ENCODE measurements at regions of chr12 and their contacts with region 1.

Region 1: GRCh38 chr12:113152835-113153814 is 3.6 kb downstream of the CFAP73 start:
- DNase-seq: peak; percentile 89
- H3K4me3 Mint-ChIP-seq: peak overlapping the region; percentile 98
- H3K27ac Mint-ChIP-seq: peak overlapping the region; percentile 13
- H3K4me1 Mint-ChIP-seq: peaks cover 30% of the 10 kb centered on the region
- H3K27me3 Mint-ChIP-seq: no peaks in the 10 kb centered on the region
- CTCF ChIP-seq: peak; percentile 25

Region 2: DNA sequence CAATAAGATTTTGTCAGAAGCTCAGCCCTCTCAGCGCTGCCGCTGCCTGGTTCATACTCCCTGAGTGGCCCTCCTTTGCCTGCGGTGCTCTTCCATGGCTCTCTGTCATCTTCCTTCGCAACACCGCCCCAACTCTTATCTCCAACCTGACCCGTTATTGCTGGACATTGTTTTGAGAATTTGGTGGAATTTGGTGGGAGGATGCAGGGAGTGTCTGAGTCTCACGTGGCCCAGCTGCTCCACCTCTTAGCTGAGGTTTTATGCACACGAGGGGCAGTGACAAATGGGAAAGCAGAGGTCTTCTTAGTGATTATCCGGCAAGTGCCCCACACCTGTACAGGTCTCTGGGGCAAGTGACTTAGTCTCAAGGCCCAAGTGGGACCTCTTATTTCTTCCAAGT is 459.1 kb before region 1 on chr12:
- CTCF ChIA-PET with region 1: no interaction called
- intact Hi-C with region 1: no loop called
- DNase-seq: no peak
- H3K4me3 Mint-ChIP-seq: no peak overlapping the region
- H3K27ac Mint-ChIP-seq: no peak overlapping the region
- H3K4me1 Mint-ChIP-seq: no peaks in the 10 kb centered on the region
- H3K27me3 Mint-ChIP-seq: peaks cover 64% of the 10 kb centered on the region
- CTCF ChIP-seq: no peak

Region 3: DNA sequence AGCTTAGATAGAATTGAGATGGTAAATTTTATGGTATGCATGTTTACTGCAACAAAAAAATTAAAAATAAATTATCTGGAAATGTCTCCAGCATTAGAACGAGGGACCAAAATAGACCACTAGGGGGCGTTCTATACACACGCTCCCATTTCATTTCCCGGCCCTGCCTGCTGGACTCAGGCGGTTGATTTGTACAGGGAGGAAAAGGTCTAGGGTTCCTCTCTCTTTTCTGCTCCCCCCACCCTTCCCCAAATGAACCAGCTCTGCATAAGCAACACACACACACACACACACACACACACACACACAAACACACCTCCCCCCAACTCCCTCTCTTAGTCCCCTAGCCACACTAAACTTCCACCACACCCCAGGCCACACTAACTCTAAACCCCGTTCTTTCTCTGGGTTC is 104.4 kb before region 1 on chr12:
- CTCF ChIA-PET with region 1: interaction called, 5 read pairs
- intact Hi-C with region 1: loop called (anchors 1 kb)
- DNase-seq: peak; percentile 80
- H3K4me3 Mint-ChIP-seq: no peak overlapping the region
- H3K27ac Mint-ChIP-seq: no peak overlapping the region
- H3K4me1 Mint-ChIP-seq: no peaks in the 10 kb centered on the region
- H3K27me3 Mint-ChIP-seq: peaks cover 83% of the 10 kb centered on the region
- CTCF ChIP-seq: peak; percentile 59

Region 4: DNA sequence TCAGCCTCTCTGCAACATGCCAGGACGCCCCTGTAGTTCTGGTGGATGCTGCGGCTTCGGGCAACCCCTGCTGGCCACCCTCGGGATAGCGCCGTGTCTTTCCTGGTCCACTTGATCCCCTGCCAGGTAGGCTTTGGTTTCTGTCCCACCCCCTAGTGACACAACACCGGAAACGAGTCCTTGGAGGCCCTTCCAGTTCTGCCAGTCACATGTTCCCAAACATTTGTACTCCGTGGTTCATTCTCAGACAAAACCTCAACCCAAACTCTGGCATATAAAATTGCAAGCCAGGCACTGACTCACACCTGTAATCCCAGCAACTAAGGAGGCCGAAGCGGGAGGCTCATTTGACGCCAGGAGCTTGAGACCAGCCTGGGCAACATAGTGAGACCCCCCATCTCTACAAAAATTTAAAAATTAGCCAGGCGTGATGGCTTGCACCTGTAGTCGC is 54.7 kb before region 1 on chr12:
- CTCF ChIA-PET with region 1: interaction called, 4 read pairs
- intact Hi-C with region 1: loop called (anchors 1 kb)
- DNase-seq: peak; percentile 97
- H3K4me3 Mint-ChIP-seq: peak overlapping the region; percentile 19
- H3K27ac Mint-ChIP-seq: peak overlapping the region; percentile 91
- H3K4me1 Mint-ChIP-seq: peaks cover 15% of the 10 kb centered on the region
- H3K27me3 Mint-ChIP-seq: no peaks in the 10 kb centered on the region
- CTCF ChIP-seq: peak; percentile 95

Region 5: GRCh38 chr12:113135178-113136127 is 17.7 kb before region 1 on chr12 and contains the start of gene RASAL1:
- CTCF ChIA-PET with region 1: interaction called, 108 read pairs
- intact Hi-C with region 1: loop called (anchors 2 kb)
- DNase-seq: peak; percentile 100
- H3K4me3 Mint-ChIP-seq: peak within 1 kb of the TSS; percentile 97
- H3K27ac Mint-ChIP-seq: peak within 1 kb of the TSS; percentile 96
- H3K4me1 Mint-ChIP-seq: peaks cover 52% of the 10 kb centered on the region
- H3K27me3 Mint-ChIP-seq: no peaks in the 10 kb centered on the region
- CTCF ChIP-seq: peak; percentile 97
- total RNA-seq, gene RASAL1: 59.7 and 85.9 TPM in 2 replicates

Region 6: GRCh38 chr12:113142173-113142885 is 10.8 kb before region 1 on chr12:
- CTCF ChIA-PET with region 1: interaction called, 108 read pairs
- intact Hi-C with region 1: no loop called
- DNase-seq: peak; percentile 97
- H3K4me3 Mint-ChIP-seq: peak overlapping the region; percentile 58
- H3K27ac Mint-ChIP-seq: peak overlapping the region; percentile 99
- H3K4me1 Mint-ChIP-seq: peaks cover 44% of the 10 kb centered on the region
- H3K27me3 Mint-ChIP-seq: no peaks in the 10 kb centered on the region
- CTCF ChIP-seq: no peak

Measured in Calu3 (cell line).